Left ventricle myocardium superior (tissue), 1 donor: ENCODE measurements at regions of chr16 and their contacts with region 1.

Region 1: DNA sequence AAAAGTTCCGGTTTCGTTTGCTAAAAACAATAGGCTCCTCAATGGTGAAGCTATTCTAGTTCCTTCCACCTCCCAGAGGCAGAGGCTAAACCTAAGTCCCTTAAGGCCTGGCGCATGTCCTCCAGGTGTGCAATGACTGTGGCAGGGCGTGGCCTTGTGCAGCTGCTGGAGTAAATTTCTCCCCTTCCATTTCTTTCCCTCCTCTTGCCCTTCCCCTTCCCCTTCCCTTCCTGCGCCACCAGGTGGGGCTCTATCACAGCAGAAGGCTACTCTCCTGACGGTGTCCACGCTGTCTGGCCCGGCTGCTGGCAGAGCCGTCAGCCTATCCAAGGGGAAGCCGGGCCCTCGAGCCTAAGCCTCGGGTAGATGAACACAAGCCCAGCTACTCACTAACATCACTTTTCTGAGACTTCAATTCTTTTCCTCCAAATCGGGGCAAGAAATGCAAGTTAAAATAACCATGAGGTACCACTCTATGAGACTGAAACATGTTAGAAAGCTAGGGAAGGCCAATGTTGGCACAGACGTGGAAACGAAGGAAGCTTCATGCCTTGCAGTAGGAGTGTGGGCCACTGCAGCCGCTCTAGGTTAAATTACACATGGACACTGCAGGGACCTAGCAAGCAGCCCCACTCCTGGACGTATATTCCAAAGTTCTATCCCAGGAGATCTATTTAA is 34.4 kb downstream of the C16orf78 start:
- DNase-seq: peak; percentile 89
- ATAC-seq: peak; percentile 99

Region 2: GRCh38 chr16:49592546-49593423 is 184.8 kb after region 1 on chr16:
- intact Hi-C with region 1: loop called (anchors 10 kb)
- DNase-seq: no peak
- ATAC-seq: peak; percentile 63

Region 3: GRCh38 chr16:49921791-49922456 is 513.9 kb after region 1 on chr16:
- intact Hi-C with region 1: loop called (anchors 10 kb)
- DNase-seq: peak; percentile 65
- ATAC-seq: peak; percentile 81